Activated T-helper 1 cell treated with anti-CD3 and anti-CD28 coated beads, Interleukin-12 subunit alpha, Interleukin-12 subunit beta, Interleukin-2, Interleukin-4 antibody, amounts not matched to agents 30 ng/mL and 10 ng/mL and 1 ng/mL, durations not matched to agents 14 hours and 24 hours and 36 hours (primary cell): ENCODE measurements at regions of chr15 and their contacts with region 1.

Region 1: DNA sequence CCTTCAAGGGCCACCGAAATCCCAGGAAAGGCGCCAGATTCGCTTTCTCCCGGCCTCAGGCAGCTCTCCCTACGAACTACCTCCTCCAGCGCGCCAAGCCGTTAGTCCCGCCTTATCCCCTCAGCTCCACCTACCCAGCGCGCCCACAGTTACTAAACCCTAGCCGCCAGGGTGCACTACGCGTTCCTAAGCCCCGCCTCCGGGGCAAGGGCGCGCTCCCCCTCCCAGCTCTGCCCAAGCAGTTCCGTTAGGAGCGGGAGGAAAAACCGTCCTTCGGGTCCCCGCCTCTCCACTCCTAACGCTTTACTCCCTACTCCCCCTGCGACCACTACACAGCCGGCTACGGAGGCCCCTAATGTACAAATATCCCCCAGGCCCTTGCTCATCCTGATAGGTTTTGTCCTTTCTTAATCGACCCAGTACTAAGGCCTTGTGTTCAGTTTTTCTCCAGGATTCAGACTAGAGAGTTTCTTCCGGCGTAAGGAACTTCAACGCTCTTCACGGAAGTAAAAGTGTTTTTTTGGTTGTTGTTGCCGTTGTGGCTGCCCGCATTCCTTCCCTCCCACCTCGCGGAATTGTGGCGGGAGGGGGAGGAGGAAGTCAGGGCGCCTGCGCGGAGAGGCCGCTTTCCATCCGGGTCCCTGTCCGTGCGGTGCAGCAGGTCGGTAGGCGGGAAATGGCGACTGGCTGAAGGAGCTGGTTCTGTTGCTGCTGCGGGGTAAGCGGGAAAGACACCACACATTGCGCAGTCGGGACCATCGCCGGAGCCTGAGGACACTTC is at the start of gene CTDSPL2:
- DNase-seq: peak; percentile 93
- H3K4me3 Mint-ChIP-seq: peak within 1 kb of the TSS; percentile 95
- H3K27ac Mint-ChIP-seq: peak within 1 kb of the TSS; percentile 97
- H3K4me1 Mint-ChIP-seq: peaks cover 42% of the 10 kb centered on the region
- H3K27me3 Mint-ChIP-seq: no peaks in the 10 kb centered on the region
- total RNA-seq, gene CTDSPL2: 65.9 and 66.0 TPM in 2 replicates

Region 2: GRCh38 chr15:43791993-43792760 is 635.0 kb before region 1 on chr15 and contains the start of gene SERF2:
- intact Hi-C with region 1: loop called (anchors 1 kb)
- DNase-seq: peak; percentile 99
- H3K4me3 Mint-ChIP-seq: peak within 1 kb of the TSS; percentile 97
- H3K27ac Mint-ChIP-seq: peak within 1 kb of the TSS; percentile 94
- H3K4me1 Mint-ChIP-seq: peaks cover 43% of the 10 kb centered on the region
- H3K27me3 Mint-ChIP-seq: no peaks in the 10 kb centered on the region
- total RNA-seq, gene SERF2: 531 and 540 TPM in 2 replicates

Region 3: DNA sequence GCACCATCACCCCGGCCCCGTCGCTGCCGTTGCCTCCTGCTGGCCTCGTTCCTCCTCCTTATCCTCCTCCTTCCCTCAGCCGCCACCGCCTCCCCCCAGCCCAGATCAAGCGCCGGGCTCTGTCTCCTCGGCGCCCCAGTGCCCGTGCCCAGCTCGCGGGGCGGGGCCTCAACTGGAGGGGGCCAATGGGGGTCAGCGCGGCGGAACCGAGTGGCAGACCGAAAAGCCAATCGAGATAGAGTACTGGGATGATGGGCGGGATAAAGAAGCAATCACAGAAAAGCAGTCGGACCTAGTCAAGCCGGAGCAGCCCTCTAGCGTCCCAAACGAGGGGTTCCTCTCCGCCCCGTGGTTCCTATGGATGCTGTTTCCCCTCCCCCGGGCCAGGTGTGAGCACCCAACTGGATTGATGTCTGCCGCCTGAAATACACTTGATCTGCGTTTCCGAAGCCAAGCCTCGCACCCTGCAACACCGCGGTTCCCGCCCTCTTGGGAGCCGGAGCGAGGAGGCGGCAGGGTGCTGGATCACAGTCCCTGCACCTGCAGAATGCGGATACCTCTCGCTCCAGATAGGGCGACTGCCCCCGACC is 231.9 kb before region 1 on chr15 and contains the start of gene FRMD5:
- intact Hi-C with region 1: loop called (anchors 2 kb)
- DNase-seq: peak; percentile 76
- H3K4me3 Mint-ChIP-seq: peak within 1 kb of the TSS; percentile 86
- H3K27ac Mint-ChIP-seq: no peak within 1 kb of the TSS
- H3K4me1 Mint-ChIP-seq: peaks cover 20% of the 10 kb centered on the region
- H3K27me3 Mint-ChIP-seq: peaks cover 57% of the 10 kb centered on the region
- total RNA-seq, gene FRMD5: not detected in 2 replicates

Region 4: GRCh38 chr15:44286814-44287452 is 140.2 kb before region 1 on chr15:
- intact Hi-C with region 1: loop called (anchors 1 kb)
- DNase-seq: no peak
- H3K4me3 Mint-ChIP-seq: peak overlapping the region; percentile 92
- H3K27ac Mint-ChIP-seq: peak overlapping the region; percentile 100
- H3K4me1 Mint-ChIP-seq: peaks cover 44% of the 10 kb centered on the region
- H3K27me3 Mint-ChIP-seq: peaks cover 9% of the 10 kb centered on the region

Region 5: DNA sequence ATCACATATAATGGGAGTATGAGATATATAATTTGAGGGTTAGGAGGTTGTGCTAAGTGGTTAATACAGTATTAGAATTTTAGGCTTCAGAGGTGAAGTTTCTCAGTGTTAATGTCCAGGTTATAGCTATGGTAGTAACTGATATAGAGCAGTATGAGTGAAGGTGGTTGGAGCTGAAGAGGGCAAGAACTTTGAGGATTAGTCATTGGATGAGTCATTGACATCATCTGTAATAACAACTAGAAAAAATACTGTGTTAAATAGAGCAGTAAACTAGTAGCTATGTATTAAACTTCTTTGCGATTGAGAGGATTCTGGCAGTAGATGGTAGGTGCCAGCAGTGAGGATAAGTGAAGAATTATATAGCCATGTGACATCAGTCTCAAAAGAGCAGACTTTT is 62.3 kb after region 1 on chr15:
- intact Hi-C with region 1: loop called (anchors 5 kb)
- DNase-seq: no peak
- H3K4me3 Mint-ChIP-seq: no peak overlapping the region
- H3K27ac Mint-ChIP-seq: peak overlapping the region; percentile 20
- H3K4me1 Mint-ChIP-seq: peaks cover 14% of the 10 kb centered on the region
- H3K27me3 Mint-ChIP-seq: no peaks in the 10 kb centered on the region

Region 6: DNA sequence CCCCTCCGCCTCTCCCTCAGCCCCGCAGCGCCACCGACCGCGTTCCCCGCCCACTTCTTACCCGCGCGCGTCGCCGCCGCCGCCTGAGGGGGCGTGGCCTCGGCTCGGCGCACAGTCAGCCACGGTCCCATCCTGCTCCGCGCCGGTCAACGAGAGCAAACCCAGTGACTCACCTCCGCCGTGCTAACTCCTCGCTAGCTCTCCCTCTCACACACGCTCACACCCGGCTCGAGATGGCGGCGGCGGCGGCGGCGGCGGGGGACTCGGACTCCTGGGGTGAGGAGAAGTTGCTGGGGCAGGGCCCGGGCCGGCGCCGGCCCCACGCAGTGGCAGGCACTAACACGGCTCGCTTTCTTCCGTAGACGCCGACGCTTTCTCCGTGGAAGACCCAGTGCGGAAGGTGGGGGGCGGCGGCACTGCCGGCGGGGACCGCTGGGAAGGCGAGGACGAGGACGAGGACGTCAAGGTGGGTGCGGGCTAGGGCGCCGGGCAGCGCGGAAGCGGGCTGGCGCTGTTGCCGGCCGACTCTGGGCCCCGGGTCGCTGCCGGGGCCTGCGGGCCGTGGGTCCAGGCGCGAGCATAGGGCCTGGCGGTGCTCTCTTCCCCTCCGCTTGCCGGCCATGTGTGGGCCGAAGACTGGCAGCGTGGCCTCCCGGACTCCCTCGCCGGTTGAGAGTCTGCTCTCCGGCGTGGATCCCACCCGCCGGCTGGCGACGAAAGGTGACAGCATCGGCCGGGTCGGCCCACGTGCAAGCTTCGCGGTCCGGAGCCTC is 110.0 kb after region 1 on chr15 and contains the start of gene EIF3J:
- intact Hi-C with region 1: loop called (anchors 1 kb)
- DNase-seq: peak; percentile 95
- H3K4me3 Mint-ChIP-seq: peak within 1 kb of the TSS; percentile 93
- H3K27ac Mint-ChIP-seq: peak within 1 kb of the TSS; percentile 98
- H3K4me1 Mint-ChIP-seq: peaks cover 52% of the 10 kb centered on the region
- H3K27me3 Mint-ChIP-seq: no peaks in the 10 kb centered on the region
- total RNA-seq, gene EIF3J: 163 and 168 TPM in 2 replicates